Mucosa of descending colon (tissue), 3 donors: ENCODE measurements at regions of chr17 and their contacts with region 1.

Region 1: GRCh38 chr17:58710936-58711775 is 18.8 kb downstream of the RAD51C start:
- DNase-seq: peak in 1 of 3 donors; percentile 84
- ATAC-seq: no peak
- H3K4me3 ChIP-seq: no peak overlapping the region
- H3K4me1 ChIP-seq: no peaks in the 10 kb centered on the region
- CTCF ChIP-seq: no peak

Region 2: DNA sequence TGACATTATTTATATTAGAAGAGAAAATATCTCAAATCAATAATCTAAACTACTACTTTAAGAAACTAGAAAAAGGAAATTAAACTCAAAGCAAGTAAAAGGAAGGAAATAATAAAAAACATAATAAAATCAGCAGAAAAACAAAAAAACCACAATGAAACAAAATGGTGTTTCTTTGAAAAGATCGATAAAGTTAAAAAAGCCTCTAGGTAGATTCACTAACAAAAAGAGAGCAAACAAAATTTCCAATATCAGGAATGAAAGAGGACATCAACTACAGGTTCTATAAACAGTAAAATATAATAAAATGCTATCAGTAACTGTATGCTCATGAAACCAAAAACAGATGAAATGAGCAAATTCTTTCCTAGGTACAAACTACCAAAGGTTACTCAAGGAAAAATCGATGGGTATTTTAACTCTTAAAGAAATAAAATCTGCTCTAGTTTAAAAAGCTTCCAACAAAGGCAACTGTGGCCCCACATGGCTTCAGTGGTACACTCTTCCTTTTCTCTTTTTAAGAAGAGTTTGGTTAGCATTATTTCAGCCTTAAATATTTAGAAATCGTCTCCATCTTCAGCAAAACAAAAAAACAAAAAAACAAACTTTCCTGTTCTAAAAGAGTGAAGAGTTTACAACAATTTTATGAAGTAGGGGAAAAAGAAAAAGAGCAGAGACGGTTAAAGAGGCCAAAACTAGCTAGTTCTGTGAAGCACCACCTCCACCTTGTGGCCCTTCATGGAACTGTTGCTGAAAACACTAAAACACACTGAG is 293.4 kb after region 1 on chr17:
- intact Hi-C with region 1: loop called (anchors 5 to 10 kb)
- DNase-seq: peak in 2 of 3 donors; percentile 39 to 82
- ATAC-seq: peak; percentile 85
- H3K4me3 ChIP-seq: no peak overlapping the region
- H3K4me1 ChIP-seq: peaks cover 3% of the 10 kb centered on the region
- CTCF ChIP-seq: peak; percentile 88